ENCODE measurements at regions of chr1 and their contacts with region 1.

Region 1: GRCh38 chr1:178412400-178412770 is 84.4 kb downstream of the CLEC20A start:
- DNase-seq: peak; percentile 70
- ATAC-seq: peak; percentile 84
- H3K4me3 ChIP-seq: no peak overlapping the region
- H3K27ac ChIP-seq: no peak overlapping the region
- H3K4me1 ChIP-seq: peaks cover 5% of the 10 kb centered on the region; the same call in 1 of the 2 replicates
- H3K27me3 ChIP-seq: no peaks in the 10 kb centered on the region
- CTCF ChIP-seq: no peak
- POLR2A ChIP-seq: no peak
- RAD21 ChIP-seq: no peak

Region 2: GRCh38 chr1:178361841-178362240 is 50.5 kb before region 1 on chr1:
- CTCF ChIA-PET with region 1: no interaction called
- POLR2A ChIA-PET with region 1: no interaction called
- dilution Hi-C with region 1: no loop called
- in situ Hi-C with region 1: no loop called
- intact Hi-C with region 1: no loop called
- DNase-seq: no peak
- ATAC-seq: no peak
- H3K4me3 ChIP-seq: no peak overlapping the region
- H3K27ac ChIP-seq: no peak overlapping the region
- H3K4me1 ChIP-seq: peaks cover 5% of the 10 kb centered on the region; the same call in 1 of the 2 replicates
- H3K27me3 ChIP-seq: no peaks in the 10 kb centered on the region
- CTCF ChIP-seq: no peak
- POLR2A ChIP-seq: no peak
- RAD21 ChIP-seq: no peak

Region 3: DNA sequence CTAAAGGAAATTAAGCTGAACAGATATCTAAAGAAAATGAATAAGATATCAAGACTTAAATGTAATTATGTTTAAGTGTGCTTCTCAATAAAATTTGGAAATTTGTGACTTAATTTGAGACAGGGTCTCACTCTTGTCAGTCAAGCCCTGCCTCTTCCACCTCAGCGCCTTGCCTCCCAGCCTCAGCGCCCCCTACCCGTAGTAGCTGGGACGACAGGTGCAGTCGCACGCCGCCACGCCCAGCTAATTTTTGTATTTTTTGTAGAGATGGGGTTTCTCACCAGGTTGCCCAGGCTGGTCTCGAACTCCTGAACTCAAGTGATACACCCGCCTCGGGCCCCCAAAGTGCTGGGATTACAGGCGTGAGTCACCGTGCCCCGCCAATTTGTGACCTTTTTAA is 32.6 kb before region 1 on chr1:
- CTCF ChIA-PET with region 1: no interaction called
- POLR2A ChIA-PET with region 1: no interaction called
- dilution Hi-C with region 1: no loop called
- in situ Hi-C with region 1: no loop called
- intact Hi-C with region 1: loop called (anchors 5 kb)
- DNase-seq: no peak
- ATAC-seq: no peak
- H3K4me3 ChIP-seq: no peak overlapping the region
- H3K27ac ChIP-seq: no peak overlapping the region
- H3K4me1 ChIP-seq: no peaks in the 10 kb centered on the region
- H3K27me3 ChIP-seq: no peaks in the 10 kb centered on the region
- CTCF ChIP-seq: no peak
- POLR2A ChIP-seq: no peak
- RAD21 ChIP-seq: no peak

Measured in IMR-90 (cell line).